ENCODE measurements at regions of chr6 and their contacts with region 1.

Region 1: GRCh38 chr6:41039060-41039998 is at the start of gene UNC5CL:
- DNase-seq: peak; percentile 76
- H3K4me3 Mint-ChIP-seq: no peak within 1 kb of the TSS
- H3K27ac Mint-ChIP-seq: peak within 1 kb of the TSS; percentile 85
- H3K4me1 Mint-ChIP-seq: peaks cover 43% of the 10 kb centered on the region
- H3K27me3 Mint-ChIP-seq: no peaks in the 10 kb centered on the region
- CTCF ChIP-seq: peak; percentile 66
- total RNA-seq, gene UNC5CL: 0.19 and 0.59 TPM in 2 replicates

Region 2: GRCh38 chr6:40894962-40895799 is 144.1 kb before region 1 on chr6:
- CTCF ChIA-PET with region 1: interaction called, 10 read pairs
- POLR2A ChIA-PET with region 1: no interaction called
- intact Hi-C with region 1: no loop called
- DNase-seq: peak; percentile 71
- H3K4me3 Mint-ChIP-seq: no peak overlapping the region
- H3K27ac Mint-ChIP-seq: no peak overlapping the region
- H3K4me1 Mint-ChIP-seq: no peaks in the 10 kb centered on the region
- H3K27me3 Mint-ChIP-seq: peaks cover 27% of the 10 kb centered on the region
- CTCF ChIP-seq: peak; percentile 79

Region 3: DNA sequence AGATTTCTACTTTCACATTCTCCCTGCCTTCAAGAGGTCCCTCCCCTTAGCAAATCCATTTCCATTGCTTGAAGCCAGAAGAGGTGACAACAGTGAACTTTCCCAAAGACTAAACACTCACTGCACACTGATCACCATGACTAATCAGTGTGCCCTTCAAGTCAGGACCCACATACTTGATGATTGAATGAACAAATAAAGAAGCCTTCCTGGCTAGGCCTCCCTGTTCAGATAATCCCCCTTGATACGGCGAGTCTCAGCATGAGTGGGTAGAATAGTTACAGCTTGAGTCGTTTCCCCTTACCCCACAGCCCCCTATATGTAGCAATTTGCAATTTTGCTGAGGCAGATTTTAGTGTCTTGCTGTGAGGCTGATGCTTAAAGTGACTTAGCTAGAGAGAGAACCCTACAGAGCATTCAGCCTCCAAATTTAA is 102.5 kb before region 1 on chr6:
- CTCF ChIA-PET with region 1: no interaction called
- POLR2A ChIA-PET with region 1: no interaction called
- intact Hi-C with region 1: no loop called
- DNase-seq: no peak
- H3K4me3 Mint-ChIP-seq: no peak overlapping the region
- H3K27ac Mint-ChIP-seq: no peak overlapping the region
- H3K4me1 Mint-ChIP-seq: peaks cover 8% of the 10 kb centered on the region
- H3K27me3 Mint-ChIP-seq: no peaks in the 10 kb centered on the region
- CTCF ChIP-seq: no peak

Region 4: DNA sequence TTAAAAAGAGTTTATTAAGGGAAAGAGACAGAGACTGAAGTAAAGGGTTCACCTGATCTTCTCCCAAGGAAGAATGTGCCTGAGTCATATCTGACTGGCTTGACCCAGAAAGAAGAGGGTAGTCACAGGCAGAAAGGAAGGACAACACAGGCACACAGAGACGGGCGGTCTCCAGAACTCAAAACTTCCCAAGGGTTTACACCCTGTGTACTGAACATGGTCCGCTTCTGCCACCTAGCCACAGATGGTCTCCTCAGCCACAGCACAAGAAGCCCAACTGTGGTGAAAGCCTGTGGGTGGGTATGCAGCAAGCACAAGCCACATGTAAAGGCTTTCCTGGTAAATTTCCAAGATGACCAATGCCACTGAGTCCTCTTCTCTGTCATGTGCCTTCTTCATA is 17.5 kb before region 1 on chr6:
- CTCF ChIA-PET with region 1: interaction called, 43 read pairs
- POLR2A ChIA-PET with region 1: interaction called, 9 read pairs
- intact Hi-C with region 1: no loop called
- DNase-seq: peak; percentile 76
- H3K4me3 Mint-ChIP-seq: no peak overlapping the region
- H3K27ac Mint-ChIP-seq: peak overlapping the region; percentile 63
- H3K4me1 Mint-ChIP-seq: peaks cover 17% of the 10 kb centered on the region
- H3K27me3 Mint-ChIP-seq: no peaks in the 10 kb centered on the region
- CTCF ChIP-seq: peak; percentile 22

Region 5: GRCh38 chr6:41049521-41049920 is 10.2 kb after region 1 on chr6:
- CTCF ChIA-PET with region 1: interaction called, 14 read pairs
- POLR2A ChIA-PET with region 1: interaction called, 3 read pairs
- intact Hi-C with region 1: no loop called
- DNase-seq: no peak
- H3K4me3 Mint-ChIP-seq: no peak overlapping the region
- H3K27ac Mint-ChIP-seq: peak overlapping the region; percentile 22
- H3K4me1 Mint-ChIP-seq: no peaks in the 10 kb centered on the region
- H3K27me3 Mint-ChIP-seq: no peaks in the 10 kb centered on the region
- CTCF ChIP-seq: no peak

Region 6: DNA sequence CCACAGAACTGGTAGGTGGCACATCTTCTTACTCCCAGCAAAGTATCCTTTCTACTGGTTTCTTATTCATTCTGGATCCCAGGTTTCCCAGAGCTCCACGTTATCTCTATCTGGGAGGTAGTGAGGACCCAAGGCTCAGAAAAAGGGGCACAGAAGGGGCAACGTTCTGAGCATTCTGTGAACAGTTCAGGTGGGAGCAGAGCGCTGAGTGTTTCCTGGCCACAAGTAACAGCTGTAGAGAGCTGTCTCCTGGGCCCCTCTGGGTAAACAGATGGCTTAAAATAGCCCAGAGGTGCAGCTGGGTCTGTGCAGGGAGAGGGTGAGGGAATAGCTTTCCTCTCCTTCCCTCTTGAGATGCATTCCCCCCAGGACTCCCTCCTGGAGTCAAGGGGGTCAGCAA is 15.8 kb after region 1 on chr6:
- CTCF ChIA-PET with region 1: interaction called, 14 read pairs
- POLR2A ChIA-PET with region 1: interaction called, 5 read pairs
- intact Hi-C with region 1: no loop called
- DNase-seq: no peak
- H3K4me3 Mint-ChIP-seq: no peak overlapping the region
- H3K27ac Mint-ChIP-seq: no peak overlapping the region
- H3K4me1 Mint-ChIP-seq: peaks cover 4% of the 10 kb centered on the region
- H3K27me3 Mint-ChIP-seq: no peaks in the 10 kb centered on the region
- CTCF ChIP-seq: no peak

Region 7: GRCh38 chr6:41066867-41067304 is 27.6 kb after region 1 on chr6:
- CTCF ChIA-PET with region 1: interaction called, 11 read pairs
- POLR2A ChIA-PET with region 1: interaction called, 12 read pairs
- intact Hi-C with region 1: no loop called
- DNase-seq: peak; percentile 75
- H3K4me3 Mint-ChIP-seq: no peak overlapping the region
- H3K27ac Mint-ChIP-seq: peak overlapping the region; percentile 79
- H3K4me1 Mint-ChIP-seq: peaks cover 15% of the 10 kb centered on the region
- H3K27me3 Mint-ChIP-seq: no peaks in the 10 kb centered on the region
- CTCF ChIP-seq: peak; percentile 70

Region 8: GRCh38 chr6:41072676-41073623 is 33.6 kb after region 1 on chr6 and contains the start of gene NFYA:
- CTCF ChIA-PET with region 1: interaction called, 11 read pairs
- POLR2A ChIA-PET with region 1: interaction called, 12 read pairs
- intact Hi-C with region 1: no loop called
- DNase-seq: peak; percentile 99
- H3K4me3 Mint-ChIP-seq: peak within 1 kb of the TSS; percentile 85
- H3K27ac Mint-ChIP-seq: peak within 1 kb of the TSS; percentile 95
- H3K4me1 Mint-ChIP-seq: peaks cover 33% of the 10 kb centered on the region
- H3K27me3 Mint-ChIP-seq: no peaks in the 10 kb centered on the region
- CTCF ChIP-seq: peak; percentile 23
- total RNA-seq, gene NFYA: 41.5 and 42.1 TPM in 2 replicates

Measured in MCF 10A (cell line).